Heart left ventricle (tissue), 16 donors: ENCODE measurements at regions of chr7 and their contacts with region 1.

Region 1: DNA sequence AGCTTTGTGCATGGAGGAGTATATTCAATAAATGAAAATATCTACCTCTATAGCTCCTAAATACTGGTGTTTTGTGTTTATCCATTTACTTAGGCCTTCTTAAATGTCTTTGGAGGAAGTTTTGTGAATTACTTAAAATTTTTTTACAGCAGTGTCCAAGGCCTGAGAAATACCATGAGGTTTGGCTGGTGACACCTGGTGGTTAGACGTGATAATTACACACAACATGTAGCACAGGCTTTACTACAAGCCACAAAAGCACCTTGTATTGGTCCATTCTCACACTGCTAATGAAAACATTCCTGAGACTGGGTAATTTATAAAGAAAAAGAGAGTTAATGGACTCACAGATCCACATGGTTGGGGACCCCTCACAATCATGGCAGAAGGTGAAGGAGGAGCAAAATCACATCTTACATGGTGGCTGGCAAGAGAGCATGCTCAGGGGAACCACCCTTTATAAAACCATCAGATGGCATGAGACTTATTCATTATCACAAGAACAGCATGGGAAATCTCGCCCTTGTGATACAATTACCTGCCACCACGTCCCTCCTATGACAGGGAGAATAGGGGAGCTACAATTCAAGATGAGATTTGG is 20.6 kb downstream of the HYAL4 start:
- DNase-seq: peak in 3 of 5 donors; percentile 30 to 42 (median 38)
- ATAC-seq: peak; percentile 58 to 85 (median 84)
- H3K4me3 ChIP-seq: no peak overlapping the region
- H3K27ac ChIP-seq: no peak overlapping the region
- H3K4me1 ChIP-seq: peaks cover 0 to 13% (median 4%) of the 10 kb centered on the region in 12 donors
- H3K27me3 ChIP-seq: no peaks in the 10 kb centered on the region
- CTCF ChIP-seq: peak; percentile 63 to 87 (median 78)
- POLR2A ChIP-seq: no peak

Region 2: GRCh38 chr7:123494193-123494796 is 371.3 kb before region 1 on chr7:
- intact Hi-C with region 1: loop called in 8 of 10 experiments (anchors 5 to 10 kb)
- DNase-seq: no peak
- ATAC-seq: no peak
- H3K4me3 ChIP-seq: no peak overlapping the region
- H3K27ac ChIP-seq: no peak overlapping the region
- H3K4me1 ChIP-seq: peaks cover 0 to 2% (median 0%) of the 10 kb centered on the region in 12 donors
- H3K27me3 ChIP-seq: peaks cover 0 to 4% (median 0%) of the 10 kb centered on the region in 9 donors
- CTCF ChIP-seq: peak; percentile 67 to 89 (median 80)
- POLR2A ChIP-seq: no peak

Region 3: DNA sequence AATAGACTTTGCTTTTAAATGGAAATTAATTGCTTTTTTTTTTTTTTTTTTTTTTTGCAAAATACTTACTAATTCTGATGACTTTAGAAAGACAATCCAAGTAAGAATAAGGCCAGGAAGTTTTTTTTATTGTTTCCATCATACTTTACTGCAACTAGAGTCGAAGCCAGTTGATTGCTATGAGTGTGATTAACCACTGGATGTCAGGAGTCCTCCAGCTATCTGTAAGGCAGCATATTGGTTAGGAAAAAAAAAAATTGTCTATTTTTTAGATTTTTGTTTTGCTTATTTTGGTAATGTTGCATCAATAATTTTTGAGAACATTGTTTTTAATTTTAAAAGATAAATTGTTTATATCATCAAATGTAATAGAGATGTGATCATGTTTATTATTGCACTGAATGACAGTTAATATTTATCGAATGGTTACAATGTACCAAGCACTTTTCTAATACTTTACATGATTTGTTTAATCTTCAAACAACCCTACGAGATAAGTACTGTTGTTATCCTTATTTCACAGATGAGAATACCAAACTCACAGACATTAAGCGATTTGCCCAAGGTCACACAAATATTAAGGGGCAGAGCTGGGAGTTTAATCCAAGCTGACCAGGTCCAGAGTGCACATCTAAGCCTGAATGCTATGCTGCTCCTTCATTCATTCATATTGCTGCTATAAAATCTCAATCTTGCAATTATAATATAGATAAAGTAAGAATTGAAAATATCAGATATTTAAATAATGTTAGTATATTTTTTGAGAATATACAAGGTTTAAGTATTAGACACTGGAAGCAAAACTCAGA is 229.9 kb before region 1 on chr7:
- intact Hi-C with region 1: loop called in 6 of 10 experiments (anchors 2 to 10 kb)
- DNase-seq: no peak
- ATAC-seq: peak; percentile 62 to 77 (median 70)
- H3K4me3 ChIP-seq: peak overlapping the region in 1 of 12 donors; percentile 7
- H3K27ac ChIP-seq: peak overlapping the region in 6 of 12 donors; percentile 11 to 38 (median 32)
- H3K4me1 ChIP-seq: peaks cover 0 to 21% (median 6%) of the 10 kb centered on the region in 12 donors
- H3K27me3 ChIP-seq: no peaks in the 10 kb centered on the region
- CTCF ChIP-seq: peak; percentile 27 to 72 (median 64)
- POLR2A ChIP-seq: no peak

Region 4: DNA sequence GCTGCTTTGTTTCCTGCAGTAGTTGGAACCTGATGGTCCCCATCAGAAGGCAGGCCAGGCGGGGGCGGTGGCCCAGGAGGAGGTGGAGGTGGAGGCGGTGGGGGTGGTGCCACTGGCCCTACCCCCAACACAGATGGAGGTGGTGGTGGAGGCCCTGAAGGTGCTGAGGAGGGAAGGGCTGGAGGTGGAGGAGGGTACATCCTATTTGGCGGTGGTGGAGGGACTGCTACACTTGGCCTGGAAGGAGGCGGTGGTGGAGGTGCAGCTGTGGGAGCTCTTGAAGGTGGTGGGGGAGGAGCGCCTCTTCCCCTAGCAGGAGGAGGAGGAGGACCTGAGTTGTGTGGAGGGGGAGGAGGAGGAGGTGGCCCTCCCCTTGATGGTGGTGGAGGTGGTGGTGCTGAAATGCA is 173.1 kb before region 1 on chr7:
- intact Hi-C with region 1: loop called in 2 of 10 experiments (anchors 5 to 10 kb)
- DNase-seq: no peak
- ATAC-seq: peak in 1 of 4 donors; percentile 50
- H3K4me3 ChIP-seq: no peak overlapping the region
- H3K27ac ChIP-seq: no peak overlapping the region
- H3K4me1 ChIP-seq: peaks cover 0 to 4% (median 0%) of the 10 kb centered on the region in 12 donors
- H3K27me3 ChIP-seq: no peaks in the 10 kb centered on the region
- CTCF ChIP-seq: no peak
- POLR2A ChIP-seq: no peak

Region 5: GRCh38 chr7:123797673-123798527 is 67.7 kb before region 1 on chr7:
- intact Hi-C with region 1: loop called (anchors 1 to 5 kb)
- DNase-seq: no peak
- ATAC-seq: peak in 2 of 4 donors; percentile 49 to 59
- H3K4me3 ChIP-seq: no peak overlapping the region
- H3K27ac ChIP-seq: no peak overlapping the region
- H3K4me1 ChIP-seq: peaks cover 0 to 6% (median 0%) of the 10 kb centered on the region in 12 donors
- H3K27me3 ChIP-seq: no peaks in the 10 kb centered on the region
- CTCF ChIP-seq: peak; percentile 33 to 69 (median 64)
- POLR2A ChIP-seq: no peak